Psoas muscle (tissue), 8 donors: ENCODE measurements at regions of chr10 and their contacts with region 1.

Region 1: GRCh38 chr10:97292097-97292862 is at the start of gene ARHGAP19:
- DNase-seq: peak; percentile 94 to 96
- ATAC-seq: peak; percentile 99 to 100 (median 100)
- H3K4me3 ChIP-seq: peak within 1 kb of the TSS; percentile 82
- H3K27ac ChIP-seq: peak within 1 kb of the TSS; percentile 86
- H3K4me1 ChIP-seq: peaks cover 8% of the 10 kb centered on the region
- H3K27me3 ChIP-seq: no peaks in the 10 kb centered on the region
- CTCF ChIP-seq: no peak
- total RNA-seq, gene ARHGAP19: 1.2 to 3.9 (median 1.8) TPM

Region 2: GRCh38 chr10:97048649-97049427 is 243.4 kb before region 1 on chr10:
- intact Hi-C with region 1: no loop called
- DNase-seq: no peak
- ATAC-seq: no peak
- H3K4me3 ChIP-seq: no peak overlapping the region
- H3K27ac ChIP-seq: no peak overlapping the region
- H3K4me1 ChIP-seq: no peaks in the 10 kb centered on the region
- H3K27me3 ChIP-seq: no peaks in the 10 kb centered on the region
- CTCF ChIP-seq: no peak

Region 3: GRCh38 chr10:97318772-97319651 is 26.7 kb after region 1 on chr10 and contains the start of gene FRAT1:
- intact Hi-C with region 1: loop called in 1 of 2 experiments (anchors 1 kb)
- DNase-seq: peak; percentile 93 to 94
- ATAC-seq: peak; percentile 88 to 91 (median 90)
- H3K4me3 ChIP-seq: peak within 1 kb of the TSS; percentile 91
- H3K27ac ChIP-seq: peak within 1 kb of the TSS; percentile 96
- H3K4me1 ChIP-seq: peaks cover 9% of the 10 kb centered on the region
- H3K27me3 ChIP-seq: no peaks in the 10 kb centered on the region
- CTCF ChIP-seq: no peak
- total RNA-seq, gene FRAT1: 1.2 to 3.4 (median 2.7) TPM